ENCODE measurements at regions of chr2 and their contacts with region 1.

Region 1: GRCh38 chr2:171811245-171811628 is 82.8 kb downstream of the SLC25A12 start:
- DNase-seq: no peak
- H3K4me3 ChIP-seq: no peak overlapping the region
- H3K27ac ChIP-seq: no peak overlapping the region
- H3K27me3 ChIP-seq: no peaks in the 10 kb centered on the region
- CTCF ChIP-seq: peak; percentile 20

Region 2: DNA sequence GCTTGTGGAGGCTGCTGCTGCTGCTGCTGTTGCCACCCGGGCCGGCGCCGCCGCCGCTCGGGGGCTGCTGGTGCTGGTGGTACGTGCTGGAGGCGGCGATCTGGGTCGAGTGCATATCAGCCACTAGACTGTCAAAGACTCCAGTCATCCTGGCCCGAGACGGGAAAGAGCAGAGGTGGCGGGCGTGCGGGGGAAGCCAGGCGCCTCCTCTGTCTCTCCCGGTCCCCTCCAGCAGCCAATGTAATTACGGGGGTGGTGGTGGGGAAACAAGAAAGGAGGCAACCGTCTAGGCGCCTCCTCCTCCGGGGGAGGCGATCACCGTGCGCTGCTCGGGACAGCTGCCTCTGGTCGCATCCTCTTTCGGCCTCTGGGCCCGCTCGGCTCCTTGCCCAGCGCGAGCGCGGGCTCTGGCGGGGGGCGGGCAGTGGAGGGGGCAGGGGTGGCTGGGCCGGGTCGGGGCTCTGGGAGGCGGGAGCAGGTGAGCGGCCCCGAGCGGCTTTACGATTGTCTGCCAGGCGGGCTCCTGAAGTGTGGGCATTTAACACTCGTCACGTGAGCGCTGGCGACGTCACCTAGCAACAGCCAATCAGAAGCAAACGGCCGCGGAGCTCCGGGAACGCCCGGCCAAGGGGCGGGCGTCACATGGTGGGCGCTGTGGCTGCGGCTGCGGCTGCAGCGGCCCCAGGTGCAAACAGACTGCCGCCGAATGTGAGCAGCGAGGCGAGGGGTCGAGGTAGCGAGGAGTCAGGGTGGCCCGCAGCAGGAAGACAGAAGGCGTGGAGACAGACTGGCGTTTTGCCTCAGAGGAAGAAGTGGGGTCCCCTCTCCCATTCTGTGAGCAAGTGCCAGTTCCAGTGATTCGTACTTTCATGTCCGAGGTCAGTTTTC is 291.4 kb after region 1 on chr2 and contains the start of gene DLX2:
- in situ Hi-C with region 1: loop called (anchors 25 kb)
- DNase-seq: peak; percentile 79
- H3K4me3 ChIP-seq: peak within 1 kb of the TSS; percentile 64
- H3K27ac ChIP-seq: no peak within 1 kb of the TSS
- H3K27me3 ChIP-seq: peaks cover 17% of the 10 kb centered on the region
- CTCF ChIP-seq: no peak